ENCODE measurements at regions of chr2 and their contacts with region 1.

Region 1: GRCh38 chr2:102240640-102241370 is 54.0 kb downstream of the IL1RL2 start:
- DNase-seq: peak; percentile 94
- ATAC-seq: peak; percentile 94
- H3K4me3 Mint-ChIP-seq: peak overlapping the region; percentile 15
- H3K27ac Mint-ChIP-seq: peak overlapping the region; percentile 84
- H3K4me1 Mint-ChIP-seq: peaks cover 42% of the 10 kb centered on the region
- H3K27me3 Mint-ChIP-seq: no peaks in the 10 kb centered on the region

Region 2: DNA sequence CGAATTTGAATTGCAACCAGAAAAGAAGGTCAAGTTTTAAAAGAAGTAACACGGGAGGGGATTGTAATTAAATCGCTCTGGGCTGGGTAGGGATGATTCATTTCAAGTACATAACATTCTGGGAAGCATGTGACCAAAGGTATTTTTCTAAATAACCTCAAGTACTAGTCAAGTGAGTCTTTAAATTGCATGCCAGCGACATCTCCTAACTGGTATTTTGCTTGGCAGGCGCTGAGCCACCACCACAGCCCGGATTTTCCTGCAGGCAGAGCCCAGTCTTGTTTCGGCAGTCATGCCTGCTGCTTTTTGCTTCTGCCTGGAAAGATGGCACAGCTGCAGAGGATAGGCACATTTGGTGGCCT is 1454.5 kb before region 1 on chr2:
- CTCF ChIA-PET with region 1: no interaction called
- POLR2A ChIA-PET with region 1: no interaction called
- intact Hi-C with region 1: no loop called
- DNase-seq: no peak
- ATAC-seq: no peak
- H3K4me3 Mint-ChIP-seq: no peak overlapping the region
- H3K27ac Mint-ChIP-seq: no peak overlapping the region
- H3K4me1 Mint-ChIP-seq: no peaks in the 10 kb centered on the region
- H3K27me3 Mint-ChIP-seq: no peaks in the 10 kb centered on the region

Region 3: DNA sequence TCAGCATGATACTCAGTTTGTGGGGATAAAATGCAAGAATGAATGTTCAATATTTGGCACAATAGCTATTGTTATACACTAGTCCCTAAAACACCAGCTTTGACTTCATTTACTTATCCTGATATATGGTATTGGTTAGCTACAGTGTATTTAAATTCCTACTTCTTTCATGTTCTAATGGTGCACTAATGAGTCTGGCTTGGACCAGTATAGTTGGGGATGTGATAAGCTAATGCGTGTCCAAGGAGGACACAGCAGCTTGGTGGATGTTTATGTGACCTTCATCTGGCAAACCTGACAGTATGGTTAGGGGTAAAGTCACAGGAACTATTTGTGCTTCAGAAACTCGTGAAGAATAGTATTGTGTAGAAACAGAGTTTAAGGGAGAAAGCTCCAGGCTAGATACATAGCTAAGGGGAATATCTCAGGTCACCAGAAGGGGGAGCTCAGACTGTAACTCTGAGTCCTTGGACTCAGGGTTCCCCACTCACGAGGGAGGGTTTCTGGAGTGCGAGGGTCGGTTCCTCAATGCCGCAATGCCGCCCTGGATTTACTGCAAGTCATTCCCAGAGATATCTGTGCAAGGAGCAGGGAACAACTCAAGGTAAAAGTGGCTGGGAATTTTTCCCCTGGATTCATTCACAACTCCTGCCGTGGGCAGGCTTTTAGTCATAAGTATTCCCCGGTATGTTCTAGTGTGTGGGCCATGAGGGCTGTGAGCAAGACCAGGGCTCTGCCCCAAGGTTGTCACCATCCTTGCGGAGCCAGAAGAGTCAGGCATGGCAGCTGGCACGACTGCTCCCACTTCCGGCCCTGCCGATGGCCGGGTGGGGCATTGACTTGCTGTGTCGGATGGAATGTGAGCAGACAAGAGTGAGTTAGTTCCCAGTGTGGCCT is 234.6 kb before region 1 on chr2:
- CTCF ChIA-PET with region 1: interaction called, 68 read pairs
- POLR2A ChIA-PET with region 1: interaction called, 3 read pairs
- intact Hi-C with region 1: loop called (anchors 1 to 2 kb)
- DNase-seq: peak; percentile 67
- ATAC-seq: peak; percentile 27
- H3K4me3 Mint-ChIP-seq: peak overlapping the region; percentile 5
- H3K27ac Mint-ChIP-seq: peak overlapping the region; percentile 77
- H3K4me1 Mint-ChIP-seq: peaks cover 16% of the 10 kb centered on the region
- H3K27me3 Mint-ChIP-seq: no peaks in the 10 kb centered on the region

Region 4: GRCh38 chr2:102057502-102058292 is 183.1 kb before region 1 on chr2:
- CTCF ChIA-PET with region 1: interaction called, 19 read pairs
- POLR2A ChIA-PET with region 1: no interaction called
- intact Hi-C with region 1: no loop called
- DNase-seq: peak; percentile 74
- ATAC-seq: peak; percentile 44
- H3K4me3 Mint-ChIP-seq: no peak overlapping the region
- H3K27ac Mint-ChIP-seq: peak overlapping the region; percentile 5
- H3K4me1 Mint-ChIP-seq: peaks cover 31% of the 10 kb centered on the region
- H3K27me3 Mint-ChIP-seq: no peaks in the 10 kb centered on the region

Region 5: GRCh38 chr2:102129951-102130646 is 110.7 kb before region 1 on chr2:
- CTCF ChIA-PET with region 1: interaction called, 10 read pairs
- POLR2A ChIA-PET with region 1: no interaction called
- intact Hi-C with region 1: no loop called
- DNase-seq: no peak
- ATAC-seq: no peak
- H3K4me3 Mint-ChIP-seq: no peak overlapping the region
- H3K27ac Mint-ChIP-seq: peak overlapping the region; percentile 22
- H3K4me1 Mint-ChIP-seq: peaks cover 61% of the 10 kb centered on the region
- H3K27me3 Mint-ChIP-seq: peaks cover 6% of the 10 kb centered on the region

Region 6: GRCh38 chr2:102206666-102207341 is 34.0 kb before region 1 on chr2:
- CTCF ChIA-PET with region 1: interaction called, 12 read pairs
- POLR2A ChIA-PET with region 1: no interaction called
- intact Hi-C with region 1: no loop called
- DNase-seq: no peak
- ATAC-seq: no peak
- H3K4me3 Mint-ChIP-seq: no peak overlapping the region
- H3K27ac Mint-ChIP-seq: no peak overlapping the region
- H3K4me1 Mint-ChIP-seq: no peaks in the 10 kb centered on the region
- H3K27me3 Mint-ChIP-seq: no peaks in the 10 kb centered on the region

Region 7: DNA sequence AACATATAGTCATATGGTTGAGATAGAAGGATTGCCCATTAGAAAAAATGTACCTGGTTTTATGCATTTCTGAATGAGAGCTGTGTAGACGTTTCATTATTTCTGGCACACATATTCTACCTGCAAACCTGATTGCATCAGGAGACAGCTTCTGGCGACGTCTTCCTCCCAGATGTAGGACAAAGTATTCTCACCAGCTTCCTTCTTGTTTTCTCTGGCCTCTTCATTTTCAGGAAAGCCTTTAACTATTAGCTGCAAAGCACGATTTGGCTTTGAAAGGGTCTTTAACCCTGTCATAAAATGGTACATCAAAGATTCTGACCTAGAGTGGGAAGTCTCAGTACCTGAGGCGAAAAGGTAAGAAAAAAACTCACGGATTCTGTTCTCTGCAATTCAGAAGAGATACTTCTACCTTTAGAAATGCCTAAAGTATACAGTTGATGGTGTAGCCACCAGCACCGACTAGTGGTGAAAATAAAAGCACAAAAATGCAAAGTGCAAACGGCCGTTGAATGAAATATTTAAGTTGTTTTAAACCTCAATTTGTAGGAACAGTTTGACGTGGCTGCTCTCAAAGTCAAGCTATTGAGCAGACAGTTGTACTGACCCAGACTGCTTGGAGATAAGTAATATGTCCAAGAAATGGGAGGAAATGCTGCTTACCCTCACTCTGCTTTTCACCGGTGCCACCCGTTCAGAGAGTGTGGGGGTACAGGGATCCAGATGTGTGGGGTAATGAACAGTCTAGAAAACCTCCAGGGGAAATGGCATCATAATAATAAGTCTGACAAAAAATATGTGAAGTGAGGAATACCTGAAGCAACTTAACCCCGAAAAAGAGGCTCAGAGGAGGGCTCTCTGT is 202.4 kb after region 1 on chr2:
- CTCF ChIA-PET with region 1: interaction called, 29 read pairs
- POLR2A ChIA-PET with region 1: interaction called, 4 read pairs
- intact Hi-C with region 1: no loop called
- DNase-seq: peak; percentile 65
- ATAC-seq: peak; percentile 84
- H3K4me3 Mint-ChIP-seq: no peak overlapping the region
- H3K27ac Mint-ChIP-seq: peak overlapping the region; percentile 56
- H3K4me1 Mint-ChIP-seq: peaks cover 11% of the 10 kb centered on the region
- H3K27me3 Mint-ChIP-seq: no peaks in the 10 kb centered on the region

Measured in activated CD4-positive, alpha-beta T cell treated with anti-CD3 and anti-CD28 coated beads for 36 hours (primary cell).